ENCODE measurements at regions of chr21 and their contacts with region 1.

Region 1: DNA sequence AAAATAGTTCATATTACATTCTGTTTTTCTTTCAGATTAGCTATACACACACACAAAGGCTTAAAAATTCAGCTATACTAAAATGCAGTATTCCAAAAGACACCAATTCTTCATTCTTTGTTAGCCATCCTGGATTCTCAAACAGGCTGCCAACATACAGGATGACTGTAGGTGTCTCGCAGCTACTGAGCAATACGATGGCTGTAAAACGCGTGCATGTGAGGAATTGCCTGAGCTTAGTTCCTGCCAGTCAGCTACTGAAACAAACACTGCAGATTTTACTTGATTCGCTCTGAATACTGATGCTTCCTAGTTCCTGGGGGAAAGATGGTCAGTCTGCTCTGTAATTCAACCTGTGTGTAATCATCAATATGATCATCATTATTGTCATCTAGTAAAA is 24.8 kb upstream of the HMGN1 start:
- DNase-seq: no peak
- CTCF ChIP-seq: peak; percentile 35

Region 2: DNA sequence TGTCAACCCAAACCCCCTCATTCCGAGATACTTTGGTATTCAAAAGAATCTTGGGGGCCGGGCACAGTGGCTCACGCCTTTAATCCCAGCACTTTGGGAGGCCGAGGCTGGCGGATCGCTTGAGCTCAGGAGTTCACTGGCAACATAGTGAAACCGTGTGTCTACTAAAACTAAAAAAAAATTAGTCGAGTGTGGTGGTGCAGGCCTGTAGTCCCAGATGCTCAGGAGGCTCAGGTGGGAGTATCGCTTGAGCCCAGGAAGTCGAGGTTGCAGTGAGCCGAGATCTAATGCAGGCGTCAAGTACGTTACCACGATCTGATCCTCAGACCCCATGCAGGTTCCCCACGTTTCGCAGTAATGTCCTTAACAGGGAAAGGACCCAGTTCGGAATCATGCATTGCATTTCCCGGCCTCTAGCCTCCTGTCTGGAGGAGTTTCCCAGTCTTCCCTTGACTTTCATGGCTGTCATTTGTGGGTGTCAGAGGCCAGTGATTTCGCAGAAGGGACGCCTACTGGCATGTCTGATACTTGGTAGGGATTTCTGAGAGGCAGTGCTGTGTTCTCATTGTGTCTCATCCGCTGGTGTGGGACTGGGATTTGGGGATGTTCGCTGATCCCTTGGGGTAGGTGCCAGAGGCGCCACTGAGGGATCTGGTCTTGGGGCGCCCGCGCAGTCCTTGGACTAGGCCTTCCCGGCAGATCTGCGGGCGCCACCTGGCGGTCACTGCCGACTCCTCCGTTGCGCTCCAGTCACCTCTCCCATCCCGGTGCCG is 14.6 kb after region 1 on chr21:
- CTCF ChIA-PET with region 1: interaction called, 15 read pairs
- POLR2A ChIA-PET with region 1: no interaction called
- DNase-seq: peak; percentile 92
- CTCF ChIP-seq: peak; percentile 96

Measured in GM10248 (cell line).